Activated CD4-positive, alpha-beta memory T cell treated with anti-CD3 and anti-CD28 coated beads for 36 hours (primary cell): ENCODE measurements at regions of chr6 and their contacts with region 1.

Region 1: DNA sequence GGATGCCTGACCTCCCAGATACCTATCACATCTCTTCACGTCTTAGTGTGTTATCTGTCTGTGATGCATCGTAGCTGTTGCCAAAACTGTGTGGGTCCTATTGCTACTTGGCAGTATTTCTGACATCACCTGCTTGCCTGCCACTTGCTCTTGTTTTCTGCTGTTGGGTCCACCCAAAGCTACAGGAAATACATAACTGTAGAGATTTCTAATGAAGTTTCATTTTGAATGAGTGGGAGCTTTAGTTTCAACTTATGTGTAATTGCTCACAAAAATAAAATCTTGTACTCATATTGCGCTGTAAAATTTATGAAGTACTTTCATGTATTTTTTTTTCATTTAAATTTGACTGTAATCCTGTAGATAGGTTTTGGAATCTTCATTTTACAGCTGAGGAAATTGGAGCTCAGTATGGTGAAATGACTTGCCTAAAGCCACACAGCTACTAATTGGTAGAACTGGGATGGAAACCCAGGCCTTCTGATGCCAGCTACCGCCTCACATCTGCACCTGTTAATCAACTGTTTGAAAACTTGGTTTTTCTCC is 113.6 kb upstream of the MAN1A1 start:
- DNase-seq: peak; percentile 34
- H3K4me3 Mint-ChIP-seq: no peak overlapping the region
- H3K27ac Mint-ChIP-seq: peak overlapping the region; percentile 11
- H3K4me1 Mint-ChIP-seq: peaks cover 27% of the 10 kb centered on the region
- H3K27me3 Mint-ChIP-seq: no peaks in the 10 kb centered on the region

Region 2: GRCh38 chr6:119379809-119380208 is 83.3 kb before region 1 on chr6:
- CTCF ChIA-PET with region 1: no interaction called
- POLR2A ChIA-PET with region 1: no interaction called
- intact Hi-C with region 1: no loop called
- DNase-seq: no peak
- H3K4me3 Mint-ChIP-seq: no peak overlapping the region
- H3K27ac Mint-ChIP-seq: no peak overlapping the region
- H3K4me1 Mint-ChIP-seq: no peaks in the 10 kb centered on the region
- H3K27me3 Mint-ChIP-seq: no peaks in the 10 kb centered on the region

Region 3: DNA sequence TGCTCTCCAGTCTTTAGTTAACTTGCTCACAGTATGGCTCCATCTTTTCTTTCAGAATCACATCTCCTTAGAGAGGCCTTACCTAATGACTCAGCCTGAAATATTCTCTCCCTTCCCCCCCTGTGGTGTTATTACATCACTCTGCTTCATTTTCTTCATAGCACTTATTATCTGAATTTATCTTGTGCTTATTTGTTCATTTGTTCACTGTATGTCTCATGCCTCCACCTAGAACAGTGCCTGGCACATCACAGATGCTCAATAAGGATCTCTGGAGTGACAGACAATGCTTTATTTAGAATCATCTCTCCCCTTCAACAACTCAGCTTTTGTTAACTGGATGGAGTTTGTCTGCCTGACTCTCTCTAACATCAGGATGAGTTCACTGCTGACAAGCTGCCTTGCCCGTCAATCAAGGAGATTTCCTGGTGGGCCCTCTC is 17.0 kb before region 1 on chr6:
- CTCF ChIA-PET with region 1: no interaction called
- POLR2A ChIA-PET with region 1: interaction called, 3 read pairs
- intact Hi-C with region 1: loop called (anchors 1 kb)
- DNase-seq: no peak
- H3K4me3 Mint-ChIP-seq: no peak overlapping the region
- H3K27ac Mint-ChIP-seq: no peak overlapping the region
- H3K4me1 Mint-ChIP-seq: peaks cover 15% of the 10 kb centered on the region
- H3K27me3 Mint-ChIP-seq: no peaks in the 10 kb centered on the region

Region 4: GRCh38 chr6:119533603-119534279 is 70.6 kb after region 1 on chr6:
- CTCF ChIA-PET with region 1: no interaction called
- POLR2A ChIA-PET with region 1: no interaction called
- intact Hi-C with region 1: loop called (anchors 2 kb)
- DNase-seq: no peak
- H3K4me3 Mint-ChIP-seq: no peak overlapping the region
- H3K27ac Mint-ChIP-seq: no peak overlapping the region
- H3K4me1 Mint-ChIP-seq: peaks cover 8% of the 10 kb centered on the region
- H3K27me3 Mint-ChIP-seq: peaks cover 7% of the 10 kb centered on the region

Region 5: GRCh38 chr6:119552021-119552420 is 88.9 kb after region 1 on chr6:
- CTCF ChIA-PET with region 1: no interaction called
- POLR2A ChIA-PET with region 1: no interaction called
- intact Hi-C with region 1: no loop called
- DNase-seq: no peak
- H3K4me3 Mint-ChIP-seq: no peak overlapping the region
- H3K27ac Mint-ChIP-seq: no peak overlapping the region
- H3K4me1 Mint-ChIP-seq: no peaks in the 10 kb centered on the region
- H3K27me3 Mint-ChIP-seq: no peaks in the 10 kb centered on the region